Psoas muscle (tissue), 8 donors: ENCODE measurements at regions of chr19 and their contacts with region 1.

Region 1: GRCh38 chr19:11380653-11381534 is 3.2 kb downstream of the EPOR start:
- DNase-seq: peak; percentile 95 to 97
- ATAC-seq: peak; percentile 94 to 97 (median 96)
- H3K4me3 ChIP-seq: peak overlapping the region; percentile 74
- H3K27ac ChIP-seq: peak overlapping the region; percentile 70
- H3K4me1 ChIP-seq: peaks cover 39% of the 10 kb centered on the region
- H3K27me3 ChIP-seq: peaks cover 0 to 24% (median 8%) of the 10 kb centered on the region in 3 donors
- CTCF ChIP-seq: peak; percentile 65

Region 2: GRCh38 chr19:11324079-11324661 is 56.7 kb before region 1 on chr19:
- intact Hi-C with region 1: no loop called
- DNase-seq: peak; percentile 79 to 85
- ATAC-seq: peak; percentile 65 to 82 (median 80)
- H3K4me3 ChIP-seq: no peak overlapping the region
- H3K27ac ChIP-seq: peak overlapping the region; percentile 65
- H3K4me1 ChIP-seq: no peaks in the 10 kb centered on the region
- H3K27me3 ChIP-seq: peaks cover 0 to 2% (median 0%) of the 10 kb centered on the region in 3 donors
- CTCF ChIP-seq: no peak

Region 3: DNA sequence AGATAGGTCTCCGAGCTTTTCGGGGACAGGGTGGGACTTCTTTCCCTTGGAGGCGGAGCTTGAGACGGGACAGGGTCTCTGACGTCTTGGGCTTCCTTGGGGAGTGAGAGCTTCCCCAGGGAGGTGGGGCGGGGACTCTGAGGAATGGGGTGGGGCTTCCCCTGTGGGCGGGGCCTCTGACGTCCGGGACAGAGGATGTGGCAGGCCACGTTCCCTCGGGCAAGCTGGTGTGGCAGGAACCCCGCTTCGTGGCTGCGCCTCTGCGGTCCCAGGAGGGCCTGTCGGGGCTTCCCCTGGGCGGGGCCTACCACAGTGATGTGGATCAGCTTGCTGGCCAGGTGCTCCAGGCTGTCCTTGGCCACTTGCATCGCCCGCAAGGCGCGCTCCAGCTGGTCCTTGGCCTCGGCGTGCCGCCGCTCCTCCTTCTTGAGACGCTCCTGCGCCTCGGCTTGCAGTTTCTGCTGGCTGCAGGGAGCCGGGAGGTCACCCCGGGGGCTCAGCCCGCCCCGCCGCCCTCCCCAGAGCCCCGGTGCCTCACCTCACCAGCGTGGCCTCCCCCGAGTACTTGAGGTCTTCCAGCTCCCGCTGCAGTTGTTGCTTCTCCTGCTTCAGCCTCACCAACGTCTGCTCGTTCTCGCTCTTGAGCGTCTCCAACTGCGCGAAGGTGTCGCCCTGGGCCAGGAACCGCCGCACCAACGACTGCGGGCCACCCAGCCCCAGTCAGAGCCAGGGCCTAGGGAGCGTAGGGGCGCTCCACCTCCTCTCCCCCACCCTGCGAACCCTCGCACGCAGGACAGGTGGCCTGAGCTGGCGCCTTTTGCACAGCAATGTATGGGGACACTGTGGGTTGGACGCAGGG is 41.5 kb after region 1 on chr19:
- intact Hi-C with region 1: loop called in 1 of 2 experiments (anchors 5 kb)
- DNase-seq: peak; percentile 70 to 86
- ATAC-seq: peak; percentile 57 to 70 (median 64)
- H3K4me3 ChIP-seq: peak overlapping the region; percentile 45
- H3K27ac ChIP-seq: no peak overlapping the region
- H3K4me1 ChIP-seq: no peaks in the 10 kb centered on the region
- H3K27me3 ChIP-seq: peaks cover 0 to 64% (median 28%) of the 10 kb centered on the region in 3 donors
- CTCF ChIP-seq: no peak

Region 4: DNA sequence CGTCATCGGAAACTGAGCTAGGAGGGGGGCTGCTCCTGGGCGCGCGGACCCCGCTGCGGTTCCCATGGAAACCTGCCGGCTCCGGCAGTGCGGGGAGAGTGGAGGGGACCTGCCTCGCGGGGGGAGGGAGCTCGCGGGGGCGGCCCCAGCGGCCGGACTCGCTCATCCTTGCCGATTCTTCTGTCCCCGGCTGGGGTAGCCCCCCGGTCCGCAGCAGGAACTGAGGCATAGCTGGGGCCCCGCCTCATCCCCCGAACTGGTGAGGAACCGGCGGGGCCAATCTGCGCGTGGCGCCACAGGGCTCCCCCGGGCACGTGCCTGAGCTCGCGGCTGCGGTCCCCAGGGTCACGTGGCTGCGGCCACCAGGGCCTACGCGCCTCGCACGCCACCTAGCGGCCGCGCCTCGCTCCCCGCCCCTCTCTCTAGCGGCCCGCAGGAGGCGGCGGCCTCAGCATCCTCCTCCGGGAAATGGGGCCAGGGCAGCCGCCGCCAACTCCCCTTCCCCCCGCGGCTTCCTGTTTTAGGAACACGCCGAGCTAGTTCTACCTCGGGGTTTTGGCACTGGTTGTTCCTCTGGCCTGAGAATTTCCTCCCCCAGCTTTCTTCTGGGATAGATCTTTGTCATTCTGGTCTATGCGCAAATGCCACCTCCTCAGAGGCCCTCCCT is 101.6 kb after region 1 on chr19:
- intact Hi-C with region 1: loop called in 1 of 2 experiments (anchors 5 kb)
- DNase-seq: peak; percentile 84 to 92
- ATAC-seq: peak; percentile 85 to 93 (median 87)
- H3K4me3 ChIP-seq: peak overlapping the region; percentile 57
- H3K27ac ChIP-seq: no peak overlapping the region
- H3K4me1 ChIP-seq: peaks cover 14% of the 10 kb centered on the region
- H3K27me3 ChIP-seq: peaks cover 0 to 62% (median 19%) of the 10 kb centered on the region in 3 donors
- CTCF ChIP-seq: peak; percentile 87

Region 5: GRCh38 chr19:11587302-11587974 is 206.5 kb after region 1 on chr19:
- intact Hi-C with region 1: loop called in 1 of 2 experiments (anchors 5 kb)
- DNase-seq: peak; percentile 74 to 81
- ATAC-seq: peak; percentile 85 to 92 (median 90)
- H3K4me3 ChIP-seq: no peak overlapping the region
- H3K27ac ChIP-seq: no peak overlapping the region
- H3K4me1 ChIP-seq: no peaks in the 10 kb centered on the region
- H3K27me3 ChIP-seq: no peaks in the 10 kb centered on the region
- CTCF ChIP-seq: peak; percentile 88